ENCODE measurements at regions of chrX and their contacts with region 1.

Region 1: DNA sequence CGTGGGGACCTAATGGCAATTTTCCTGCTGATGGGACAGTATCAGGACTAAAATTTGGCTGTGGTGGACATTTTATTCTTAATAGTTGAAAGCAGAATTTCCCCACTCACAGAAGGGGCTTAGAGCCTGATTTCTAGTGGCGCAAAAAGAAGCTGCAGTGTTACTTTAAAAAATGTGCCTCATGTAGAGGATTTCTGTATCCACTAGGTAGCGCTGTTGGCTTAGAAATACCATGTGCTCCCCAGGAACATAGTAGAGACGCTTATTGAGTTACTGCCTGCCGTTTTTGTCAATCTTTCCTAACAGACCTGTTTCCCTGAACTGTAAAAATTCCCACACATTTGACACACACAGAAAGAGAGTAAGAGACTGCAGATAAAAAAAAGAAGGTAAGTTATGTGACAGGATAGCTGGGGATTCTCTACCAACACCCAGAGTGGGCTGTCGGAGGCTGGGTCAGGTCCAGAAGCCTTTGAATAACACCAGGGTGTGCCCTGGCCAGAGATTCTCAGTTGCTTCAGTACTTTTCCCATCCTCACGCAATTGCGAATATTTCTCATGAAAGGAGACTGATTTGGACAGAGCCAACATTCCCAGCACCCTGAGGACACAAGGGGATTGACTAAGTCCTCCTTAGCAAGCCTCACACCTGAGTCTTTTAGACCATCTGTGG is 88.4 kb downstream of the ZXDA start:
- DNase-seq: no peak
- H3K4me3 Mint-ChIP-seq: no peak overlapping the region
- H3K27ac Mint-ChIP-seq: no peak overlapping the region
- H3K4me1 Mint-ChIP-seq: peaks cover 1% of the 10 kb centered on the region
- H3K27me3 Mint-ChIP-seq: no peaks in the 10 kb centered on the region

Region 2: GRCh38 chrX:57918750-57919436 is 97.1 kb after region 1 on chrX:
- intact Hi-C with region 1: loop called (anchors 1 kb)
- DNase-seq: no peak
- H3K4me3 Mint-ChIP-seq: no peak overlapping the region
- H3K27ac Mint-ChIP-seq: no peak overlapping the region
- H3K4me1 Mint-ChIP-seq: no peaks in the 10 kb centered on the region
- H3K27me3 Mint-ChIP-seq: no peaks in the 10 kb centered on the region

Region 3: DNA sequence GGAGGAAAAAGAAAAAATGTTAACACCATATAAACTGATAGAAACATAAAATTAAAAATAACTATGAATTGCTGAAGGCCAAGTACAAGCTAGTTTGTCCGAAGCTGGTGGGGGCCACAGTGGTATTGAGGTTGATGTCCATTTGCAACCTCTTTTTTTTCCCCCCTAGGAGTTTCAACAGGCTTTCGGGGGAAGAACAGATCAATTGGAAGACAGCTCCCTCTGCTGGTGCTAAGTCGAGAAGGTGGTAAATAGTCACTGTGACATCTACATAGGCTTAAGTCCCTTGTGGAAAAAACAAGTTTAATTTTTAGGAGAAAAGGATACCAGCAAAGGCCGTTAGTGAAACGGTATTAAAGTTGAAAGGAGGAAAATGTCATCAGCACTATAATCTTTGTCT is 204.1 kb after region 1 on chrX:
- intact Hi-C with region 1: loop called (anchors 5 kb)
- DNase-seq: no peak
- H3K4me3 Mint-ChIP-seq: no peak overlapping the region
- H3K27ac Mint-ChIP-seq: no peak overlapping the region
- H3K4me1 Mint-ChIP-seq: no peaks in the 10 kb centered on the region
- H3K27me3 Mint-ChIP-seq: no peaks in the 10 kb centered on the region